Right ventricle myocardium inferior (tissue), 1 donor: ENCODE measurements at regions of chr19 and their contacts with region 1.

Region 1: GRCh38 chr19:47243776-47244547 is 12.4 kb upstream of the CCDC9 start:
- DNase-seq: peak; percentile 96
- ATAC-seq: peak; percentile 96

Region 2: DNA sequence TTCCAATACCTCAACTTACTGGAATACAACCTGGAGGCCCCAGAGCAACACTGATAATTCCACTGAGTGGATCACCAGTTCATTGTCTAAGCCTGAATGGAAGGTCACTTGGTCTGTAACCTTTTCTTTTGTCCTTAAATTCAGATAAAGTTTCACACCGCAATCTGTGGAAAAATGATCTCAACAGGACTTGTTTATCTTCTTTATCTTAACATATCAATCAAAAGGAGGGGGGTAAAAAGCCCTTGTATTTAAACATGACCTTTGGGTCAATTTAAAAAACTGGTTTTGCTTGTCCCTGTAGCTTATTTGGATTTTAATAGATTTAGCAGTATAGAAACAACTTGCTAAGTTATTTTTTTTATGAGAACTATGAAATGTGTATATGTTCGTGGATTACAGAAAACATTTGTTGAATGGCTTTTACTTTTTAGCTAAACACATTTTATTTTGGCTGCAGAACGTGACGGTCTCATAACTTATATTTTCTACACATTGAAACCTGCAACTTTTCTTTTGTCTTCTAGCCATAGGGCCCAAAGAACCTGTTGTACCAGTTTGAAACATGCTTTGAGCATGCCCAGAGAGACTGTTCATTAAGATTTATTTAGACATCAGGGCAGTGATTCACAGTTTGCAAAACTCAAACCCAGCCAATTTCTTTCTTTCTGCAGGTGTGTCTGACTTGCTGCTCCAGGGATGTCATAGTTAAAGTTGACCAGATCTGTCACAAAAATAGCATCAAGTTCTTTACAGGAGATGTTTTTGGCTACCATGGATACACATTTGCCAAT is 91.5 kb before region 1 on chr19:
- intact Hi-C with region 1: loop called (anchors 1 kb)
- DNase-seq: no peak
- ATAC-seq: no peak

Region 3: DNA sequence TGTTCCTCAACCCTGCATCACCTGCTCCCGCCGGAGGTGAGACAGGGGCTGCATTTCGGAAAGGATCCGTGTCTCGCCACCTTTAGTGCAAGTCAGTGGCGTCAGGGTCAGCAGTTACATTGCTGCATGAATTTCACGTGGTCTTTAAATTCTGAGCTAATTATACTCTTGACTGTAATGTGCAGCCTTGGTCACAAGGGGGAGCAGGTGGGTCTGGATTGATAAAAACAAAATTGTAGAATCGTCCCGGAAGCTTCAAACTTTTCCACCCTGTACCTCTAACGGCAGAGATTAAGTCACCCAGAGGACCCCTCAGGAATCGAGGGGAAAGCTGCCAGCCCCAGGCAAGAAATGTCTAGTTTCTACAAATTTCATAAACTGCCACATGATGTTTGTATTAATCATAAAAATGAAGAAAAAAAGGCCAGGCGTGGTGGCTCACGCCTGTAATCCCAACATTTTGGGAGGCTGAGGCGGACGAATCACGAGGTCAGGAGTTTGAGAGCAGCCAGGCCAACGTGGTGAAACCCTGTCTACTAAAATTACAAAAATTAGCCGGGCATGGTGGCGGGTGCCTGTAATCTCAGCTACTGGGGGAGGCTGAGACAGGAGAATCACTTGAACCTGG is 33.2 kb before region 1 on chr19:
- intact Hi-C with region 1: loop called (anchors 1 kb)
- DNase-seq: peak; percentile 73
- ATAC-seq: peak; percentile 68

Region 4: GRCh38 chr19:47225746-47226425 is 18.1 kb before region 1 on chr19:
- intact Hi-C with region 1: loop called (anchors 2 kb)
- DNase-seq: peak; percentile 95
- ATAC-seq: peak; percentile 81

Region 5: DNA sequence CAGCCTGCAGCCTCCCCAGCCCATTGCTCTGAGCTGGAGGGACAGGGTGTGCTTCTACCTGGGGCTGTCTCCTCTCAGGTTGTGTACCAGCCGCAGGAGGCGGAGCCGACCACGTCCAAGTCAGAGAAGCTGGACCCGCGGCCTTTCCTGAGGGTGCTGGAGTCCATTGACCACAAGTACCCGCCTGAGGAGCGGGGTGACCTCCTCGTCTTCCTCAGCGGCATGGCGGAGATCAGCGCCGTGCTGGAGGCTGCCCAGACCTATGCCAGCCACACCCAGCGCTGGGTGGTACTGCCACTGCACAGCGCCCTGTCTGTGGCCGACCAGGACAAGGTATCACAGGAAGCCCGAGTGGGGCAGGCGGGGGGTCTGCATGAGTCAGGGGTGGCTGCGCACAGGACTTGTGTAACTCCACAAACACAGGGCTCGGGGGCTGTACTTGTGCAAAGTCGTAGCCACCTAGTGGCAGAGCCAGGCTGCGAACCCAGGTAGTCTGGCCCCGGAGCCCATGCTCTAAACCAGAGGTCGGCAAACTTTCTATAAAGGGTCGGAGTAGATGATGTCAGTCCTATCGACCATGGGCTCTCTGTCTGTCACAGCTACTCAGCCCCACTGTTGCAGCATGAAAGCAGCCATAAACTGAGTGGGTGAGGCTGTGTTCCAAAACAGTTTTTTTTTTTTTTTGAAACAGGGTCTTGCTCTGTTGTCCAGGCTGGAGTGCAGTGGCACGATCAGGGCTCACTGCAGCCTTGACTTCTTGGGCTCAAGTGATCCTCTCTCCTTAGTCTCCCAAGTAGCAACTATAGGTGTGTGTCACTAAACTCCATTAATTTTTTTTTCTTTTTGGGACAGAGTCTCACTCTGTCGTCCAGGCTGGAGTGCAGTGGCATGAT is 114.1 kb after region 1 on chr19:
- intact Hi-C with region 1: no loop called
- DNase-seq: peak; percentile 53
- ATAC-seq: peak; percentile 39